ENCODE measurements at regions of chr1 and their contacts with region 1.

Region 1: GRCh38 chr1:154961497-154962262 is at the start of gene PYGO2:
- DNase-seq: peak; percentile 86 to 93 (median 90)
- ATAC-seq: peak; percentile 91
- H3K4me3 ChIP-seq: peak within 1 kb of the TSS; percentile 91
- H3K27ac ChIP-seq: peak within 1 kb of the TSS; percentile 99
- H3K4me1 ChIP-seq: peaks cover 25 to 53% of the 10 kb centered on the region in 2 experiments
- H3K27me3 ChIP-seq: no peaks in the 10 kb centered on the region
- CTCF ChIP-seq: peak; percentile 64 to 86 (median 70)
- EP300 ChIP-seq: no peak
- POLR2A ChIP-seq: peak; percentile 92
- RAD21 ChIP-seq: peak; percentile 74 to 80
- polyA plus RNA-seq, gene PYGO2: 8.3 to 8.6 TPM

Region 2: DNA sequence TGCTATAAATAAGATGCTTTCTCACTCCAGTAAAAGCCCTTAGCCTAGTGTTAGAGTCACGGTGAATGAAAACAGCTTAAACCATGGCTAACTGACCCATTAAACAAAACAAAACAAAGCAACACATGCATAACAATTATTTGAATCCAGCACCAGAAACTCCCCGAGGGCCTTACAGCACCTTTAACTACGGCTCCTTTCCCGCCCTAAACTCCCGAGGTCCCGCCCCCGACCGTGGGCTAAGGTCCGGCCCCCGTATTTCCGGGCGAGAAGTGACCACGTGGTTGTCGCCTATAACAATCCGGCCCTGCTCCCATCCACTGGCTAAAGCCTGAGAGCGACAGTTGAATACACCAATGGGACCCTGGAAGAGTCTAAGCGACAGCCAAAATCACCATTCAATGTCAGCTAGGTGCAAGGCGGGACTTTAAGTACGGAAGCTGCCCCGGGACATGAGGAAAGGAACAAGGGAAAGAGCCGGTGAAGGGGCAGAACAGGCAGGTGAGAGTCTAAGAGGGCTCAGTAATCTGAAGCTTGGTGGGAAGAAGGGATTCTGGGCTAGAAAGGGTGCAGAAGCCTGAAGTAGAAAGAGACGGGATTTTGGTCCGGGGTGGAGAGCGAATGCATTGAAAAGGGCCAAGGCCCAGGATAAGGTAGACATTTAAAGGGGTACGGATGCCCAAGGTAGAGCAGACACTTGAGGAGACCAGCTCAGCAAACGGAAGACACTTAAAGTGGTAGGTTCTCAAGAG is 21.4 kb after region 1 on chr1 and contains the start of gene FLAD1:
- CTCF ChIA-PET with region 1: no interaction called
- POLR2A ChIA-PET with region 1: interaction called, 11 read pairs
- in situ Hi-C with region 1: no loop called
- intact Hi-C with region 1: no loop called
- DNase-seq: peak; percentile 95 to 99 (median 97)
- ATAC-seq: peak; percentile 98
- H3K4me3 ChIP-seq: peak within 1 kb of the TSS; percentile 60
- H3K27ac ChIP-seq: peak within 1 kb of the TSS; percentile 85
- H3K4me1 ChIP-seq: peaks cover 5 to 27% of the 10 kb centered on the region in 2 experiments; a peak in 4 of 5 replicates
- H3K27me3 ChIP-seq: no peaks in the 10 kb centered on the region
- CTCF ChIP-seq: 0 out of 6 replicates have a peak, but pooled peaks of 1 of the 3 experiments have one; percentile 6
- EP300 ChIP-seq: no peak
- POLR2A ChIP-seq: peak; percentile 95
- RAD21 ChIP-seq: no peak
- polyA plus RNA-seq, gene FLAD1: 24.9 to 46.7 TPM

Region 3: GRCh38 chr1:155017041-155017945 is 55.6 kb after region 1 on chr1:
- CTCF ChIA-PET with region 1: interaction called, 28 read pairs
- POLR2A ChIA-PET with region 1: interaction called, 12 read pairs
- in situ Hi-C with region 1: no loop called
- intact Hi-C with region 1: loop called (anchors 2 kb)
- DNase-seq: peak; percentile 90 to 96 (median 91)
- ATAC-seq: peak; percentile 93
- H3K4me3 ChIP-seq: peak overlapping the region; percentile 31
- H3K27ac ChIP-seq: peak overlapping the region; percentile 81
- H3K4me1 ChIP-seq: peaks cover 28 to 57% of the 10 kb centered on the region in 2 experiments
- H3K27me3 ChIP-seq: no peaks in the 10 kb centered on the region
- CTCF ChIP-seq: peak; percentile 100
- EP300 ChIP-seq: no peak
- POLR2A ChIP-seq: peak; percentile 63
- RAD21 ChIP-seq: peak; percentile 92 to 96

Region 4: DNA sequence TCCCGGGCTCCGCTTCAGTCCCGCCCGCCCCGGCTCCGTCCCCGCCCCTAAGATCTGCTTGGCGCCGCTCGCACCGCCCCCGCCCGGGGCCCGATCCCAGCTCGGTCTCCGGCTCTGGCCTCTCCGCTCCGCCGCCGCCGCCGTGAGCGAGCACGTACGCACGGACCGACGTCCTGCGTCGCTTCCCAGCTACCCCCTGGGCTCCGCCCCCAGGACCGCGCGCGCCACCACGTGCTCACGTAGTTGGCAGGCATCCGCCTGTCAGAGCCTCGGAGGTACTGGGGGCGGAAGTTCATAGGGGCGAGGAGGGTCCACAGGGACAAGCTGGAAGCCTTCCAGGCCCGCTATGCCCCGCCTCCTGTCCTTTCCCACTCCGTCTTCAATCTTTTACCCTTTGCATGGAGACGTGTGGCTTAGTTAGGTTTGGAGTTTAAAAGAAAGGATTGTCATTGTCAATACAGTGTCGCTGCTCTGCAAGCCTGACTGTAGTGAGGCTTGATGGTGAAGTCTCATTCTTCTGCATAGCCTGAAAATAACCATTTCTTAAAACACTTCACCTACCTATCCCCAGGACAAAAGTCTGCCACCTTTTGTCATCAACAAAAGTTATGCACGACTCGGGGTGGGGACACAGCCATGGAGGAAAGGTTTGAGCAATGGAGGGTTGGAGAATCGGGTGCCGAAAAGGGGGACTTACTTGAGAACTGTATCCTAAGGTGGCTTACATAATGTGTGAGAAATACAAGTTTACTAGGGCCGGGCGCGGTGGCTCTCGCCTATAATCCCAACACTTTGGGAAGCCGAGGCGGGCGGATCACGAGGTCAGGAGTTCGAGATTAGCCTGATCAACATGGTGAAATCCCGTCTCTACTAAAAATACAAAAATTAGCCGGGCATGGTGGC is 311.9 kb after region 1 on chr1 and contains the start of gene CLK2:
- CTCF ChIA-PET with region 1: no interaction called
- POLR2A ChIA-PET with region 1: no interaction called
- in situ Hi-C with region 1: no loop called
- intact Hi-C with region 1: no loop called
- DNase-seq: peak; percentile 93 to 99 (median 96)
- ATAC-seq: peak; percentile 87
- H3K4me3 ChIP-seq: peak within 1 kb of the TSS; percentile 93
- H3K27ac ChIP-seq: peak within 1 kb of the TSS; percentile 85
- H3K4me1 ChIP-seq: peaks cover 21 to 32% of the 10 kb centered on the region in 2 experiments; a peak in 4 of 5 replicates
- H3K27me3 ChIP-seq: no peaks in the 10 kb centered on the region
- CTCF ChIP-seq: no peak
- EP300 ChIP-seq: no peak
- POLR2A ChIP-seq: peak; percentile 81
- RAD21 ChIP-seq: no peak
- polyA plus RNA-seq, gene CLK2: 13.5 to 15.7 TPM

Measured in K562 (cell line).